ENCODE measurements at regions of chr4 and their contacts with region 1.

Region 1: DNA sequence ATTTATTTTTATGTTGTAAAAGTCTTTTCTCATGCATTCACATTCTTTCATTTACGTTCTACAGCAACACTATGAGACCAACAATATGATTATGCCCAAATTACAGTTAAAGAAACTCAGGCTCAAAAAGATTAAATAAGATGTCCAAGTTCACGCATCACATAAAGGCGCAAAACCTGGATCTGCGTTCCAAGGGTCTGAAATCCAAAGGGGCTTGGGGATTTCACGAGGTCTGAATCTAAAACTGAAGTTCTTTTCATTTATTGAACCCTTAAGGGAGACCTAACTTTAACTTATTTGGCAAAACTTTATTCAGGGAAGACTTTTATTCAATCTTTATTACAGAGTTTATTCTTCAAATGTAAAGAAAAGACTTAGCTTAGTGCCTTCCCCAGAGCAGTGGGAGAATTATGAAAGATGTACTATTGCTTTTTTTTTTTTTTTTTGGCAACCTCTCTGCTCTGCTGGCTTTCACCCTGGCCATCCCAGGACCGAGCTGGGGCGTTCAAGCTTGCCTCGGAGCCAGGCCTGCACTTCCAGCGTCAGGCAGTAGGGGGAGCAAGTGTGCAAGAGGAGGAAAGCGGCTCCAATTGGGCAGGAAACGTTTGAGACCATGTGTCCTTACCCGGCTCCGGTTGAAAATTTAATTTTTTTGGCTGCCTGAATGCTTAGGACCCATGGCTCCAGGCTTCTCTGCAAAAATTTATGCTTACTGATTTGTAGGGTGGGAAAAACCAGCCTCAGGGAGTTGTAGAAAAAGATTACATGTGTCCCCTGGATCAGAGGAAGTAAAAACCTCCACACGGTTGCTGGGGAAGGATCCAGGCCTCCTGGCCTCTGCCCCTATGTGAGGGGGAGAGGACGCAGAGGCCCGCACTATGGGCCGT is 344.3 kb upstream of the KLF3 start:
- DNase-seq: peak; percentile 61
- H3K4me3 ChIP-seq: no peak overlapping the region
- H3K27ac ChIP-seq: no peak overlapping the region
- H3K27me3 ChIP-seq: no peaks in the 10 kb centered on the region
- CTCF ChIP-seq: peak; percentile 99

Region 2: GRCh38 chr4:38062088-38062893 is 257.4 kb before region 1 on chr4:
- CTCF ChIA-PET with region 1: interaction called, 21 read pairs
- POLR2A ChIA-PET with region 1: no interaction called
- DNase-seq: peak; percentile 51
- H3K4me3 ChIP-seq: no peak overlapping the region; the same call in 1 of the 2 replicates
- H3K27ac ChIP-seq: no peak overlapping the region
- H3K27me3 ChIP-seq: no peaks in the 10 kb centered on the region
- CTCF ChIP-seq: peak; percentile 84

Region 3: DNA sequence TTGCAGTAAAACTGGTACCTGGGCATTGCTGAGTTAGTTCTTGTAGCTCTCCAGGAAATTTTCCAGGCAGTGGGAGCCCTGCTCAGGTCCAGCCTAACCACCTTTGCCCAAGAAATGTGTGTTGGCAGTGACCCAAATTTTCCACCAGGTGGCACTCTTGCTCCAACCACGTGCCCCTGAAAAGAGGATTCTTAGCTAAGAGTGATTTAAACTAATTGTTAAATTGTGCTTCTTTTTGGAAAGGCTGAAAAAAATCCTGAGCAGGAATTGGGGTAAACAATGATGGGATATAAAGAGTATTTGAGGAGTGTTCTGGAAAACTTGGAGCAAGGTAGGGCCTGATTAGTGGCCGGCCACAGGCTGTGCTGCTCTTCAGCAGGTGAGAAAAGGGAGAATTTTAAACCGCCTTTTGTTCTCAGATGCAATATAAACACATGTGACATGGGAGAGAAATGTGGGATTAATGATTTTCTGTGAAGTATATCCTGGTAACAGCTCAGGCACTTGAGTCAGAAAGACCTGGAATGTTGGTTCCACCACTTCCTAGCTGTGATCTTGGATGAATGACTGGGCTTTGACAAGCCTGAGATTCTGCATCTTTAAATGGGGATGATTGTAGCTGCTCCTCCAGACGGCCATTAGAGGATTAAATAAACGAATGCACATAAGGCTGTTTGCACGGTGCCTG is 139.9 kb before region 1 on chr4:
- CTCF ChIA-PET with region 1: interaction called, 14 read pairs
- POLR2A ChIA-PET with region 1: no interaction called
- DNase-seq: peak; percentile 52
- H3K4me3 ChIP-seq: no peak overlapping the region
- H3K27ac ChIP-seq: no peak overlapping the region
- H3K27me3 ChIP-seq: no peaks in the 10 kb centered on the region
- CTCF ChIP-seq: peak; percentile 92

Region 4: GRCh38 chr4:38430841-38431240 is 111.1 kb after region 1 on chr4:
- CTCF ChIA-PET with region 1: no interaction called
- POLR2A ChIA-PET with region 1: no interaction called
- DNase-seq: no peak
- H3K4me3 ChIP-seq: no peak overlapping the region
- H3K27ac ChIP-seq: no peak overlapping the region
- H3K27me3 ChIP-seq: peaks cover 10% of the 10 kb centered on the region
- CTCF ChIP-seq: no peak

Region 5: GRCh38 chr4:38605181-38605752 is 285.6 kb after region 1 on chr4:
- CTCF ChIA-PET with region 1: interaction called, 10 read pairs
- POLR2A ChIA-PET with region 1: no interaction called
- DNase-seq: no peak
- H3K4me3 ChIP-seq: no peak overlapping the region
- H3K27ac ChIP-seq: no peak overlapping the region
- H3K27me3 ChIP-seq: peaks cover 2% of the 10 kb centered on the region
- CTCF ChIP-seq: no peak

Region 6: DNA sequence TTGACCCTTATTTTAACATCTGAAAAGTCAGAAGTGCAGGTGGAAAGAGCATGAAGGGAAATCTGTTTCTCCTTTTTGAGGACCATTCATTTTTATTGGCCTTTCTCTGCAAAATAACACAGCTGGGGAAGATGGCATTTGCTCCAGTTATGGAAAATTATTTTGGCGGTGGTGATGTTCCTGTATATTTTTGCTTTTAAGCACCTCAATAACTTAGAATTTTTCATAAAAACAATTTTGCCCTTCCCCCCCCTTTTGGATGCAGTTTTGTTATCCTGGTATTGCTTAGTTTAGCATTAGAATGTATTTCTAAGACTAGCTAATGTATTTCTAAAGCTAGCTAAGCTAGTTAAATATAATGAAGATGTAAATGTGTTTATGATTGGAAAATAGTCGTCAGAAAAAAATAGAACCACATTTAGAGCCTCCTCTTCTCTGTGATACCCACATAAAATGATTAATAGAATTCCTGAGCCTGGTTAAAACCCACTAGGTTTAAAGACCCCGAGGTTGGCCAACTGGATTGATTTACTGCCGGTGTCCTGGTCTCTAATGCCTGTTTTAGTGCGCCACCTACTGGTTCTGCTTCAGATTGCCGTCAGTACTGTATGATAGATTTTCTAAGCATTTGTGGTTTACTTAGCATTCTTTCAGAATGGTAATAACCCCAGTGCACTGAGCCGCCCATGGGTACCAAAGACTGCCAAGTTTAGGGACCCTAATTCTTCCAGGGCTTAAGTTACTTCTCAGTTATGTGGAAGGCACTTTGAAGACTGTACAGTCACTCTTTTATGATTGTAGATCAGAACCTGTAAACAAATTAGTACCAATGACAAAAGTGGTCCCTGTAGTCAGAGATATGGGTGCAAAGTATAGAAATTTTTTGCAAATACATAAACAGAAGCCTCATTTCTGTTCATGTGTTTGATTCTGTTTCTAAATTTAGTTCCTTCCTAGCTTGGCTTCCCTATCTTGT is 355.7 kb after region 1 on chr4:
- CTCF ChIA-PET with region 1: interaction called, 38 read pairs
- POLR2A ChIA-PET with region 1: interaction called, 3 read pairs
- DNase-seq: peak; percentile 72
- H3K4me3 ChIP-seq: no peak overlapping the region
- H3K27ac ChIP-seq: peak overlapping the region; percentile 39
- H3K27me3 ChIP-seq: no peaks in the 10 kb centered on the region
- CTCF ChIP-seq: peak; percentile 91

Region 7: DNA sequence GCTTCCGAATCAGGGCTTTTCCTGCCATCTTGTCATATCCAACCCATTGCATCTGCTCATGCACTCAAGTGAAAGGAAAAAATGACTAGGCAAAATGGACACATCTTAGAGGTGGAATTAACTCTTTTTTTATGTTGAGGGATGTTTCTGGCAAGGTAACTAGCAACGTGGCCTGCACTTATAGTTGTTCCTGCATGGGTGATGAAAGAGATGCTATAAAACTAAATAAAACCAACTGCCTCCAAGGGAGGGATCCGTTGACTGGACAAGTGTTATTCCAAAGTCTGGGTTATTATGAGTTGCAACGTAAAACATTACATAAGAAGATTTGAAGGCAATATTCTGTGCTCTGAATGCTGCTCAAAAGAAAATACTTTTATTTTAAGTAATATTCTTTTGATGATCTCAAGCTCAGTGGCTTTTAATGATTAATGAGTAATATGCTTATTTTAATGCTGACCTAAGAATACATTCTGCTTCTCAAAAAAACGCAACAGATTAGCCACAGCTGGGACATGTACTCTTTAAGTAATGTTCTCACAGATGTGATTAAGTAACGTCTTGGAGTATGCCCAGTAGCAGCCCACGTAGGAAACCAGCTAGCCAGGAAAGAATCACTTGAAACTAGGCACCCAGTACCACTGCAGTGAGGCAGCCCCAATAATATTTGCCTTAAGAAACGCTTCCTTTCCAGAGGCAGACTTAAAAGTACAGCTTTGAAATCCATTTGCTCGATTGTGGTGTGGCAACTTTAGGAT is 371.7 kb after region 1 on chr4:
- CTCF ChIA-PET with region 1: interaction called, 13 read pairs
- POLR2A ChIA-PET with region 1: no interaction called
- DNase-seq: peak; percentile 73
- H3K4me3 ChIP-seq: no peak overlapping the region
- H3K27ac ChIP-seq: peak overlapping the region; percentile 71
- H3K27me3 ChIP-seq: no peaks in the 10 kb centered on the region
- CTCF ChIP-seq: no peak

Region 8: DNA sequence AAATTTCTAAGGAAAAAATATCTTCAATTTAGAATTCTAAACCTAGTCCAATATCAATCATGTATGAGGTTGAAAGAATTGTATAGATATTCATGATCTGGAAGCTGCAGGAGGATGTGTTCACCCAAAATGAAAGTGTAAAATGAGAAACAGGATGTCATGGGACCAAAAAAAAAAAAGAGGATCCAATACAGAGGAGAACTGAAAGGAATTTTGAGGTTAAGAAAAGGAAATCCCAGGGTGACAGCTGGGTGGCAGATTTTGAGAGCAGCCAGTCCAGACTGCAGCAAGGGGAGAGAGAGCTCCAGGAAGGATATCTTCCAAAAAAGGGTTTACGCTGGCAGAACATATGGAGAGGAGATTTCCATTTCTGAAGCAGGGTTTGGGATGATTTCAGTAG is 424.2 kb after region 1 on chr4:
- CTCF ChIA-PET with region 1: interaction called, 10 read pairs
- POLR2A ChIA-PET with region 1: no interaction called
- DNase-seq: no peak
- H3K4me3 ChIP-seq: no peak overlapping the region
- H3K27ac ChIP-seq: no peak overlapping the region
- H3K27me3 ChIP-seq: peaks cover 5% of the 10 kb centered on the region
- CTCF ChIP-seq: no peak